Dendritic cell treated with granulocyte-macrophage colony-stimulating factor and Interleukin-4, amounts not matched to agents 40 ng/mL and 50 ng/mL, for 4 days (primary cell): ENCODE measurements at regions of chr15 and their contacts with region 1.

Region 1: GRCh38 chr15:89971592-89971997 is 29.5 kb upstream of the ZNF710 start:
- H3K4me3 Mint-ChIP-seq: no peak overlapping the region
- H3K27ac Mint-ChIP-seq: peak overlapping the region; percentile 62
- H3K4me1 Mint-ChIP-seq: peaks cover 71% of the 10 kb centered on the region
- H3K27me3 Mint-ChIP-seq: no peaks in the 10 kb centered on the region

Region 2: DNA sequence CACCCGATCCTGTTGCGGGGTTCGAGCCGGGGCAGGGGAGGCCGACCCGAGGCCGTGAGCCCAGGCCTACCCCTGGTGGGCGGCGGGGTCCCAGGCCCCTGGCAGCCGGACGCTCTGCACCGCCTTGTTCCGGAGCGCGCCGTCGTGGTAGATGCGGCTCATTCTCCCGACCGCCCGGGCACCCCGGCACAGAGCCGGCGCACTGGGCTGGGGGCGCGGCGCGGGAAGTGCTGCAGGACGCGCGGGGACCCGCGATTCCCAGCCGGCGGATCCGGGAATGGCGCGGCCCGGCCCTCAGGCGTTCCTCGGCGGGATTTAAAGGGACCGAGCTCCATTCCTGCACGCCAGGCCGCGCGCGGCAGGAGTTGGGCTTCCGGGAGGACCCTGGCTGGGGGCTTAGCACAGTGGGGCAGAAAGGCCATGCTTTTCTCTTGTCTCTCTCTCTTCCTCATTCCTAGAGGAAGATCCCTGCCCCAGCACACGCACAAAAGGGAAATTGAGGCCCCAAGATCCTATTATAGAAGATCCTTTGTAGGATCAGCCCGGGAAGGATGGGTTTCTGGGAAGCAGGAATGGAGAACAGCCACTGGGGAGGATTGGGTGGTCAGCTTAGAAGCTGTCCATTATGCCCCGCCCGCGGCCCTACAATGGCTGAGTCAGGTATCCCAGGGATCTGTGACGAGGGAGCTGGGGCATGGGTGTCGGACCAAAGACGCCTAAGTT is 58.8 kb before region 1 on chr15 and contains the start of gene ARPIN:
- intact Hi-C with region 1: loop called (anchors 10 kb)
- H3K4me3 Mint-ChIP-seq: peak within 1 kb of the TSS; percentile 87
- H3K27ac Mint-ChIP-seq: peak within 1 kb of the TSS; percentile 87
- H3K4me1 Mint-ChIP-seq: peaks cover 51% of the 10 kb centered on the region
- H3K27me3 Mint-ChIP-seq: peaks cover 2% of the 10 kb centered on the region

Region 3: GRCh38 chr15:89958074-89958805 is 13.4 kb before region 1 on chr15:
- intact Hi-C with region 1: no loop called
- H3K4me3 Mint-ChIP-seq: no peak overlapping the region
- H3K27ac Mint-ChIP-seq: no peak overlapping the region
- H3K4me1 Mint-ChIP-seq: peaks cover 11% of the 10 kb centered on the region
- H3K27me3 Mint-ChIP-seq: peaks cover 2% of the 10 kb centered on the region

Region 4: GRCh38 chr15:90059208-90059985 is 87.8 kb after region 1 on chr15:
- intact Hi-C with region 1: no loop called
- H3K4me3 Mint-ChIP-seq: peak overlapping the region; percentile 28
- H3K27ac Mint-ChIP-seq: peak overlapping the region; percentile 93
- H3K4me1 Mint-ChIP-seq: peaks cover 85% of the 10 kb centered on the region
- H3K27me3 Mint-ChIP-seq: no peaks in the 10 kb centered on the region